ENCODE measurements at regions of chr20 and their contacts with region 1.

Region 1: GRCh38 chr20:2651772-2652723 is at the start of gene NOP56:
- DNase-seq: peak; percentile 94
- H3K4me3 Mint-ChIP-seq: peak within 1 kb of the TSS; percentile 84
- H3K27ac Mint-ChIP-seq: peak within 1 kb of the TSS; percentile 87
- H3K4me1 Mint-ChIP-seq: peaks cover 50% of the 10 kb centered on the region
- H3K27me3 Mint-ChIP-seq: no peaks in the 10 kb centered on the region
- total RNA-seq, gene NOP56: 285 to 302 TPM

Region 2: GRCh38 chr20:2470423-2471193 is 181.4 kb before region 1 on chr20 and contains the start of gene SNRPB:
- CTCF ChIA-PET with region 1: interaction called, 6 read pairs
- POLR2A ChIA-PET with region 1: interaction called, 75 read pairs
- DNase-seq: peak; percentile 97
- H3K4me3 Mint-ChIP-seq: peak within 1 kb of the TSS; percentile 98
- H3K27ac Mint-ChIP-seq: peak within 1 kb of the TSS; percentile 90
- H3K4me1 Mint-ChIP-seq: peaks cover 52% of the 10 kb centered on the region
- H3K27me3 Mint-ChIP-seq: no peaks in the 10 kb centered on the region
- total RNA-seq, gene SNRPB: 310 TPM

Region 3: DNA sequence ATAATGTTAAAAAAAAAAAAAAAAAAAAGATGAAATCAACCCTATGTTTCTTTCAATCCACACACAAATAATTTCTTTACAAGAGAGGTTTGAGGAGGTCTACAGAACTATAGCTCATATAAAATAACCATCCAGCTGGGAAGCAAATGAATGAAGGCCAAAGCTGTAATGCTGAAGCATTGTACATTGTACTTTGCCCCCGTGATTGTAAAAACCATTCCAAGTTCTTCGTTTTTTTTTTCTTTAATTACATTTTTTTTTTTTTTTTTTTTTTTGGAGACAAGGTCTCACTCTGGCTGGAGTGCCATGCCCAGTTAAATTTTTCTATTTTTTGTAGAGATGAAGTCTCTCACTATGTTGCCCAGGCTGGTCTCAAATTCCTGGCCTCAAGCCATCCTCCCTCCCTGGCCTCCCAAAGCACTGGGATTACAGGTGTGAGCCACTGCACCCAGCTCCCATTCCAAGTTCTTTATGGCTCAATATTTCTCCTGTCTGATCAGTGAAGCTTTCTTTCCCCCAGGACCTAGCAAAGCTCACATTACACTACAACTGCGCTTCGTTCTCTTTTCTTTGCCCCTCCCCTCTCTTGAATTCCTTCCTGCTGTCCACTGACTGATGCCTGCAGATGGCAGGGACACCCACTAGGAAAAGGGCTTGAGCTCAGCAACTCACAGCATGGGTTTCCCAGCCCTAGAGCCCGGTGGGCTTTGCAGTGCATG is 52.6 kb before region 1 on chr20:
- CTCF ChIA-PET with region 1: no interaction called
- POLR2A ChIA-PET with region 1: no interaction called
- DNase-seq: no peak
- H3K4me3 Mint-ChIP-seq: no peak overlapping the region
- H3K27ac Mint-ChIP-seq: no peak overlapping the region
- H3K4me1 Mint-ChIP-seq: peaks cover 2% of the 10 kb centered on the region
- H3K27me3 Mint-ChIP-seq: peaks cover 6% of the 10 kb centered on the region

Region 4: GRCh38 chr20:2637246-2637645 is 14.8 kb before region 1 on chr20:
- CTCF ChIA-PET with region 1: interaction called, 12 read pairs
- POLR2A ChIA-PET with region 1: interaction called, 16 read pairs
- DNase-seq: no peak
- H3K4me3 Mint-ChIP-seq: no peak overlapping the region
- H3K27ac Mint-ChIP-seq: peak overlapping the region; percentile 61
- H3K4me1 Mint-ChIP-seq: peaks cover 9% of the 10 kb centered on the region
- H3K27me3 Mint-ChIP-seq: peaks cover 20% of the 10 kb centered on the region

Region 5: DNA sequence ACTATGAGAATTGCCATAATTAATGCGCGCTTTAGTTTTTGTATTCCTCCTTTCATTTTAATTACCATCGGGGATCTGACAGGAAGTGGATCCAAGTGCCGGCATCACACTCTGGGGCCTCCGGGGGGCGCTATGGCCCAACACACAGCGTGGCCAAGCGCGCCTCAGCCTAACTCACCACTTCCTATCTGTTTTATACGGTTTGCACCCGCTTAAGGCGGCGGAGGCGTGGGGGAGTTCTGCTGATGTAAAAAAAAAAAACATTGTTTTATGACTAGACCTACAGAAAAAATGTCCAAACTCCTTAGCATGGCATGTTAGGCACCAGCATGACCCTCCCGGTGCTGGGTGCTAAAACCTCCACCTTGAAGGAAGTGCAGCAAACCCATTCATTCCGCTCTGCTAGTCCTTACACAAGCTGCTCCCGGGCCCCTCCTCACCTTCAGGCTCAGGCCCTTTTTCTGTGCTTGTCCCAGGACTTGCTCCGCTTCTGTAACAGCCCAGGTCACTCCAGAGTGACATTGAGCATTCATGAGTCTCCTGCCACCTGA is 36.1 kb after region 1 on chr20:
- CTCF ChIA-PET with region 1: interaction called, 5 read pairs
- POLR2A ChIA-PET with region 1: interaction called, 11 read pairs
- DNase-seq: peak; percentile 88
- H3K4me3 Mint-ChIP-seq: peak overlapping the region; percentile 32
- H3K27ac Mint-ChIP-seq: peak overlapping the region; percentile 21
- H3K4me1 Mint-ChIP-seq: peaks cover 26% of the 10 kb centered on the region
- H3K27me3 Mint-ChIP-seq: peaks cover 36% of the 10 kb centered on the region

Region 6: DNA sequence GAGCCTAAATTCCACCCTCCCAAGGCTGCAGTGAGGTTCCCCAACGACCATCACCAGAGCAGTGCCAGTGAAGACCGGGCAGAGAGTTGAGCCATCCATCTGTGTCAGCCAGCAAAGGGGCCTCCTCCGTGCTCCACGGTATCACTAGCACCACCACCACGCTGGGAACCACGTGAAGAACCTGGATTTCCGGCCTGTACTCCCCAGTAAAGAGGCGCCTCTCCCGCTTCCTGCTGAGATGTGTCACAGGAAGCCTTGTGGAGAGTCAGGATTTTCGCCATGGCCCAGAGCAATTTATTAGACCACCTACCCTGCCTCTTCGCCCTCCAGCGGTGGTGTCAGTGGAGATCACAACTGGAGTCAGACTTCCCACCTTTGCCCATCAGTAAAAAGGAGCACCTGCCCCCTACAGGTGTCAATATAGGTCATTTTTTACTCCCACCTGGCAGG is 119.6 kb after region 1 on chr20:
- CTCF ChIA-PET with region 1: no interaction called
- POLR2A ChIA-PET with region 1: no interaction called
- DNase-seq: no peak
- H3K4me3 Mint-ChIP-seq: no peak overlapping the region
- H3K27ac Mint-ChIP-seq: no peak overlapping the region
- H3K4me1 Mint-ChIP-seq: peaks cover 7% of the 10 kb centered on the region
- H3K27me3 Mint-ChIP-seq: peaks cover 6% of the 10 kb centered on the region

Region 7: DNA sequence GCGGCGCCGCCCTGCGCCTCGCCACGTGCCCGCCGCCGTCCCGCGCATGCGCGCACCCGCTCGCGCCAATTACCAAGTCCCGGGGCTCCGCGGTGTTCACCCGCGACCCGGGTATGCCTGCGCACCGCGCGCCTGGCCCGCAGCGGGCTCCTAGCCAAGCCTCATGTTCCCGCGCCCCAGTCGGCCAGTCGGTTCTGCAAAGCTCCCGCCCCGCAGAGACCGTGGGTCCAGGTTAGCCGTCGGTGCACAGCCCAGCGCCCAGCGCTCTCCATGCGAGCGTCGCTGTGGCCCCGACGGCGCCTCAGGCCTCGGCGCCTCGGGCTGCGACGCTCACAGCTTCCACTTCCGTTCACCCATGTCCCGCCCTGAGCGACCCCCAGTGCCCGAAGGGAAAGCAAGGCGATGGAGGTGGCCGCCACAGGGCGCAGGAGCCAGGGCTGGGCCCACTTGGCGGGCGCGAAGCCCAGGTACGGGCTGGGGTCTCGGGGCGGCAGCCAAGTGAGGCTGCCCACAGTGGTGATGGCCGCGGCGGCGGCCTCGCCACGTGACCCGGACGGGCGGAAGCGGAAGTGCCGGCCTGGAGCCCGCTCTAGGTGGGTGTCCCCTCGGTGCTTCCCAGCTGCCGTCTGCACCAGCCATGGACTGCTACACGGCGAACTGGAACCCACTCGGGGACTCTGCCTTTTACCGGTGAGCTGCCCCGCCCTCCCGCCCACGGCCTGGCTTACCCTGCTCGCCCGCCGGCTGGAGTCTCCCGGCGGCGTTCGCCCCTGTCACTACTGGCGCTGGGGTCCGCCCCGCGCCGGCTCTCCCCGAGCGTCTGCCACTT is 188.3 kb after region 1 on chr20 and contains the starts of genes PCED1A and VPS16:
- CTCF ChIA-PET with region 1: no interaction called
- POLR2A ChIA-PET with region 1: interaction called, 13 read pairs
- DNase-seq: peak; percentile 89
- H3K4me3 Mint-ChIP-seq: peak within 1 kb of the TSS; percentile 83
- H3K27ac Mint-ChIP-seq: peak within 1 kb of the TSS; percentile 80
- H3K4me1 Mint-ChIP-seq: peaks cover 23% of the 10 kb centered on the region
- H3K27me3 Mint-ChIP-seq: no peaks in the 10 kb centered on the region
- total RNA-seq, gene PCED1A: 25.0 to 25.7 TPM
- total RNA-seq, gene VPS16: 49.7 to 53.0 TPM

Region 8: GRCh38 chr20:2879146-2879545 is 227.1 kb after region 1 on chr20:
- CTCF ChIA-PET with region 1: no interaction called
- POLR2A ChIA-PET with region 1: no interaction called
- DNase-seq: no peak
- H3K4me3 Mint-ChIP-seq: no peak overlapping the region
- H3K27ac Mint-ChIP-seq: no peak overlapping the region
- H3K4me1 Mint-ChIP-seq: peaks cover 42% of the 10 kb centered on the region
- H3K27me3 Mint-ChIP-seq: no peaks in the 10 kb centered on the region